ENCODE measurements at regions of chr18 and their contacts with region 1.

Region 1: DNA sequence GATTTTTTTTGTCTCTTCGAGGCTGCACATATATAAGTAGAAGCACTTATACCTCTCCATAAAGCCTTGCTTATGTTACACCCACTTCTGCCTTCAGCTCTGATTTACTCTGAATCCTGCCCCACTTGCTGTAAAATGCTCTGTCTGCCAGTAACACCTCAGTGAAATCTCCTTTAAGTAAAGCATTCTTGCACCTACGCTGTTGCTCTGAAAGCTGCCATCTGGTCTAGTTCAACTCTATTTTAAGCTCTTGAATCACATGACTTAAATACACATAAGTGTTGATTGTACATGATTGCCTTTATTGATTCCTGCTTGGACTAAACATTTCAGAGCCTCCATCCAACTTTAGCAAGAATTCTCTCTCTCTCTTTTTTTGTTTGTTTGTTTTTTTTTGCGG is 609.0 kb upstream of the CELF4 start:
- DNase-seq: no peak
- ATAC-seq: no peak
- H3K4me3 ChIP-seq: no peak overlapping the region
- H3K27ac ChIP-seq: no peak overlapping the region
- H3K4me1 ChIP-seq: no peaks in the 10 kb centered on the region
- H3K27me3 ChIP-seq: no peaks in the 10 kb centered on the region
- CTCF ChIP-seq: no peak

Region 2: GRCh38 chr18:37980556-37980955 is 194.0 kb before region 1 on chr18:
- intact Hi-C with region 1: no loop called
- DNase-seq: no peak
- ATAC-seq: no peak
- H3K4me3 ChIP-seq: no peak overlapping the region
- H3K27ac ChIP-seq: no peak overlapping the region
- H3K4me1 ChIP-seq: no peaks in the 10 kb centered on the region
- H3K27me3 ChIP-seq: no peaks in the 10 kb centered on the region
- CTCF ChIP-seq: no peak

Region 3: DNA sequence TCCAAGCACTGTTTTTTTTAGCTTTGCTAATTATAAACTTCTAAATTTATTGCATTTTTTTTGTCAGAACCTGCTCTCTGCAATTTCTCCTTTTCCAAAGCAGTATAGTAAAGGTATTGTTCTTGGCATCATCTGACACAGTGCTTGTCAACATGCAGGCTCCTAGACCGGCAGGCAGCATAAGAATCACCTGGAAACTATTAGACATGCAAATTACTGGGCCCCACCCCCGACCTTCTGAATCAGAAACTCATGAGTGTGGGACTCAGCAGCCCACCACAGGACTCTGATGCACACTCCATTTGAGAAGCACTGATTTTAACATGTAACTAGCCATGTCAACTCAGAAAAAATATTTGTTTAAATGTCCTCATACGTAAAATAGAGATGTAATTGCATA is 57.9 kb before region 1 on chr18:
- intact Hi-C with region 1: loop called in 1 of 2 experiments (anchors 2 kb)
- DNase-seq: no peak
- ATAC-seq: no peak
- H3K4me3 ChIP-seq: no peak overlapping the region
- H3K27ac ChIP-seq: no peak overlapping the region
- H3K4me1 ChIP-seq: no peaks in the 10 kb centered on the region
- H3K27me3 ChIP-seq: no peaks in the 10 kb centered on the region
- CTCF ChIP-seq: no peak